ENCODE measurements at regions of chr4 and their contacts with region 1.

Region 1: GRCh38 chr4:67746797-67747495 is 7.2 kb downstream of the GNRHR start:
- DNase-seq: no peak
- H3K4me3 Mint-ChIP-seq: no peak overlapping the region
- H3K27ac Mint-ChIP-seq: no peak overlapping the region
- H3K4me1 Mint-ChIP-seq: peaks cover 9% of the 10 kb centered on the region
- H3K27me3 Mint-ChIP-seq: no peaks in the 10 kb centered on the region

Region 2: GRCh38 chr4:67451464-67451863 is 295.5 kb before region 1 on chr4:
- CTCF ChIA-PET with region 1: no interaction called
- POLR2A ChIA-PET with region 1: no interaction called
- intact Hi-C with region 1: no loop called
- DNase-seq: no peak
- H3K4me3 Mint-ChIP-seq: no peak overlapping the region
- H3K27ac Mint-ChIP-seq: no peak overlapping the region
- H3K4me1 Mint-ChIP-seq: no peaks in the 10 kb centered on the region
- H3K27me3 Mint-ChIP-seq: no peaks in the 10 kb centered on the region

Region 3: DNA sequence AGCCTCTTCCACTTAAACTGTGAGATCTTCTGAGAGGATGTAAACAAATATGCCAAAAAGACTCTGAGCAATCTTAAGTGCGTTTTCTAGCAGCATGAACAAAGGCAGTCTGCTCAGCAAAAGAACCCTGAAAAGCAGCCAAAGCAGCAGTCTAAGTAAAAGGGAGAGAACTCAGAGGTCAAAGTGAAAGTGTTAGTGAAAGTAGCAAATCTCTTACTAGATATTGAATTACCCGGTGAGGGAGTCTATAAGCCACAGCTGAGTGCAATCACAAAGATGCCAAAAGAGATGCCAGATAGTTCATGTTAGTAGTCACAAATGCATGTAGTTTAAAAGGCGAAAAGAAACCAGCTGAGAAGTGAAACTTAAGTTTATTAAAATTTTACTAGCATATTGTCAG is 15.1 kb after region 1 on chr4:
- CTCF ChIA-PET with region 1: interaction called, 11 read pairs
- POLR2A ChIA-PET with region 1: no interaction called
- intact Hi-C with region 1: no loop called
- DNase-seq: no peak
- H3K4me3 Mint-ChIP-seq: no peak overlapping the region
- H3K27ac Mint-ChIP-seq: no peak overlapping the region
- H3K4me1 Mint-ChIP-seq: peaks cover 4% of the 10 kb centered on the region
- H3K27me3 Mint-ChIP-seq: no peaks in the 10 kb centered on the region

Region 4: DNA sequence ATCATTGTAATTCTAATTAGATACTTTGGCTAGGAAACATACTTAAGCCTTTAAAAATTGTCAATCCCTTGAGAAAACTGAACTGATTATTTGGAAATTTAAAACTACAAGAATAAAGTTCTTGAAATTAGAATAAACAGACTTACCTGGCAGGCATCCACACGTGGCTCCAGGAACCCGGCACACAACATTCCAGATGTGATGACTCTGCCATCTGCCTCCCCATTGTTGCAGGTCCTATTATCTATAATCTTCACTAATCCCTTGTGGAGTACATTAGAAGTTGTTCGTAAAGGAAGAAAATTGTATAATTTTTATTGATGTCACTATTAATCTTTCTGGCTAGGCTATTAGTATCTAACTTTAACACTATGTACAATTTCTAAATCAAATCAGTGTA is 23.5 kb after region 1 on chr4:
- CTCF ChIA-PET with region 1: interaction called, 10 read pairs
- POLR2A ChIA-PET with region 1: interaction called, 3 read pairs
- intact Hi-C with region 1: loop called (anchors 1 kb)
- DNase-seq: no peak
- H3K4me3 Mint-ChIP-seq: no peak overlapping the region
- H3K27ac Mint-ChIP-seq: no peak overlapping the region
- H3K4me1 Mint-ChIP-seq: no peaks in the 10 kb centered on the region
- H3K27me3 Mint-ChIP-seq: no peaks in the 10 kb centered on the region